Aorta (tissue), 5 donors: ENCODE measurements at regions of chr6 and their contacts with region 1.

Region 1: GRCh38 chr6:138428944-138429598 is 25.0 kb downstream of the HEBP2 start:
- DNase-seq: no peak
- ATAC-seq: peak; percentile 54
- H3K4me3 ChIP-seq: no peak overlapping the region
- H3K27ac ChIP-seq: no peak overlapping the region
- H3K4me1 ChIP-seq: no peaks in the 10 kb centered on the region
- H3K27me3 ChIP-seq: no peaks in the 10 kb centered on the region

Region 2: DNA sequence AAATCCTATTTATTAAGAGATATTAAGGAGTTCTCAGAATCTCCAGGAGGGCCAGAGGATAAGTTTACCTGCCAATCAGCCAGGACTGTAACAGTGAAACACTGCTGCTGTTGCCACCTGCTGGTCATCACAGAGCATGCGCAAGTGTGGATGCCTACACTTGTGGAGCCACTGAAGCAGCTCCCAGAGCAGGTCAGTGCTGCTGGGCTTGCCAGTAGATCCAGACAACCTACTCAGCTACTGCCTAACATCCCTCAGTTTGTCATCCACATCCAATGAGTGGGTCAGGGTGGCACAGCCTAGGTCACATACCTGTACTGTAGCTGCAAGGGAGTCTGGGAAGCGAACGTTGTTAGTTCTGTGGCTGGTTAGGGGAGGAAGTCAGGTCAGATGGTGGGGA is 88.6 kb after region 1 on chr6:
- intact Hi-C with region 1: loop called (anchors 5 kb)
- DNase-seq: peak in 1 of 2 donors; percentile 53
- ATAC-seq: peak; percentile 60
- H3K4me3 ChIP-seq: no peak overlapping the region
- H3K27ac ChIP-seq: no peak overlapping the region
- H3K4me1 ChIP-seq: no peaks in the 10 kb centered on the region
- H3K27me3 ChIP-seq: no peaks in the 10 kb centered on the region

Region 3: DNA sequence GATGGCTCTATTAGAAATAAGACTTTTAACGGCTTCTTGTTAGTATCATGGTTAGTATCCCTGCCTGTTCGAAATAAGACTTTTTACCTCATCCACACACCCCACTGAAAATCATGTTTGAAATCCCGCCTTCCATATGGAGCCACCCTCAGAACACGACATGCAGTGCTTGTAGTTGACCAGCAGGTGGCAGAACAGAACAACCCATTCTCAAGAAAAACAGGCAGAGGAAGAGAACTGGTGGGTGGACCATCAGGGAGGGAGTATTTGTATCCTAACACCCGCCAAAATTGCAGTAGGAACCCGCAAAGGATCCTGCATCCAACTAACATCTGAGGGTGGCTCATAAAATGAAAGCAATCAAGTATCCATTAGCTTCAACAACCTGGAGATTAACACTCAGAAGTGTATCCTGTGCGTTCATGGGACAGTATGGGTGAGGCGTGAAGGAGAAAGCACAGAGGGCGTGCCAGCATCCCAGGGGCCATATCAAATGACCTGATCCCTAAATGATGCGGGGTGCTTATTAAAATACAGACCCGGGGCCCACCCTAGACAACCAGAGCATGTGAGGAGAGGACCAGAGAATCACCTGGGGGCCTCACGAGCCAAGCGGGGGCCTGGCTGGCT is 159.8 kb after region 1 on chr6:
- intact Hi-C with region 1: loop called (anchors 2 to 10 kb)
- DNase-seq: no peak
- ATAC-seq: peak; percentile 85
- H3K4me3 ChIP-seq: no peak overlapping the region
- H3K27ac ChIP-seq: no peak overlapping the region
- H3K4me1 ChIP-seq: no peaks in the 10 kb centered on the region
- H3K27me3 ChIP-seq: no peaks in the 10 kb centered on the region

Region 4: DNA sequence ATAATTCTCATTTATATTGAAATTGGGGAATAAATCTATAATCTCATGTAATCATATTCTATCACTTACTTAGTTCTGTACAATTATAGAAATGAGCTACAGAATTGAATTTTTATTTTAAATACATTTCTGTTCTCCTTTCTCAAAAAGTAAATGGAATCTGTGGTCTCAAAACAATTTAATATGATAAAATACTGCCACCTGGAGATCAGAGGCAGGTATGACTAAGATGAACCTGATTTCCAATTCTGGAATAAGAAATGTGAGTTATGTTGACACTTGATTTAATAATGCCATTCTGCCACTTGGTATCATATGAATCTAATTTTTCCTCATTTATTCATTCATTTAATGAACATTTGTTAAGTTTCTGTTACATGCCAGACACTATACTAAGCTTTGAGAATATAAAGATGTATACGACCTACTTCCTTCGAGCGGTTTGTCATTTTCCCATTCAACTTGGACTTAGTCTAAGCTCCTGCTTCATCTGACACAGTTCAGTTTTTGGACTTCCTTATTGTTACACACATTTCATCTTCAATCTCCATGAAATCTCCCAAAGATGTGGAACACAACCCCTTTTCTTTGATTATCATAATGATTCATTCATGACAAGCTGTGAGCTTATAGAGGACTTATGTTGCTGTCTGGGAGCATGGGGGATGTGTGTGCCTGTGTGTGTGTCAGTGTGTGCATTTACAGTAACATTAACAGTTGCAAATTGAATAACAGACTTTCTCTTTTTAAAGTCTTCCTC is 337.0 kb after region 1 on chr6:
- intact Hi-C with region 1: loop called in 1 of 2 experiments (anchors 5 kb)
- DNase-seq: no peak
- ATAC-seq: no peak
- H3K4me3 ChIP-seq: no peak overlapping the region
- H3K27ac ChIP-seq: no peak overlapping the region
- H3K4me1 ChIP-seq: no peaks in the 10 kb centered on the region
- H3K27me3 ChIP-seq: no peaks in the 10 kb centered on the region